ENCODE measurements at regions of chr1 and their contacts with region 1.

Region 1: DNA sequence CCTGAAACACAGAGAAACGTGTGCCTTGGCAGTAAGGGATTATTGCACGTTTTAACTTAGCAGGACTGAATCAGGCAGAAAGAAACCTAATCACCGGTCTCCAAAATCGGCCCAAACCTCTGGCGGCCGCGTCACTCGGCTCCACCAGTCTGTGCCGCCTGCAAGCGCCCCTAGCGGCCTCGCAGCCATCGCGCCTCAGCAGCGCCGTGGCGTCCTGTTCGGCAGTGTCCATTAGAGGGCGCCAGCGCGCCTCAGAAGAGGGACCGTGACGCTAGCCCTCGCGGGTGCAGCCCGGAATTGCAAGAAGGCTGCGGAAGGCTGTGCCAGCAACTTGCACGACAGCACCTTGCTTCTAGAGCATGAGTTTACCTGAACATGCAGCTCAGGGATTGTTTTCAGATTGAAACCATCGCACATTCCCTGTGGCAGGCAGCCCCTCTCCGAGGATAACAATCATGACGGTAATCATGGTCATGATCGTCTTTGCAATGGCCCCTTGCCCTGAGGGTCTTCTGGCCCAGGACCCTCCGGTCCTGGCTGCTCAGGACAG is 164.4 kb downstream of the TRIM33 start:
- DNase-seq: peak; percentile 70
- ATAC-seq: peak; percentile 100
- H3K4me3 ChIP-seq: peak overlapping the region; percentile 33; the same call in 1 of the 2 replicates
- H3K27ac ChIP-seq: no peak overlapping the region
- H3K4me1 ChIP-seq: peaks cover 6% of the 10 kb centered on the region; the same call in 1 of the 2 replicates
- H3K27me3 ChIP-seq: peaks cover 0 to 2% of the 10 kb centered on the region in 2 experiments; a peak in 2 of 4 replicates
- CTCF ChIP-seq: peak; percentile 100; a peak in 5 of 6 replicates
- EP300 ChIP-seq: no peak
- POLR2A ChIP-seq: no peak
- RAD21 ChIP-seq: peak; percentile 99

Region 2: DNA sequence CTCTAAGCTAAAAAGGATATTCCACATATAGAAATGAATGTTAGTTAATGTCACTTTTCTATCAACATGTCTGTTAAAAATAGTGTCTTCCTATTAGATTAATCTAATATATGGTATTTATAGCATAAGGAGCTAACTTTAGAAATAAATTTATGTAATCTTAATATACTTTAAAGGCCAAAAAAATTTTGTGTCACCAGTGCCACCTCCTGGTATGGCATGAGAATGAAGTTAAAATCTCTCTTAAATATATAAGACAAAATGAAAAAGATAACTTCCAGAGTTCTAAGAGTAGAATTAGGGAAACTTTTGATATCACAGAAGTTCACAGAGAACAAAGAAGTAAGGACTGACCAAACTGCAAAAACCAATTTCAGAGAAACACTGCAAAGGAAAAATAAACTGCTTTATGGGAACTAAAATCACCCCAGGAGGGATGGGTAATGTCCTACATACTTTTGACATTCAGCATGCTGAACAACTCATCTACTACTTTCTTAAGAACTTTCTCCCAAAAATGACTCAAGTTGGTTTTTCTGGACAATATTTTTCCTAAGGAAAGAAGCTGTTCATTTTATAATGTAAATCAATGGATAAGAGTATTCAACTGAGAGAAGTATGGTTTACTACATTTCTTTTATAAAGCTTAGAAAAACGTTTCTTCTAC is 81.7 kb after region 1 on chr1:
- CTCF ChIA-PET with region 1: interaction called, 11 read pairs
- POLR2A ChIA-PET with region 1: no interaction called
- RAD21 ChIA-PET with region 1: no interaction called
- SMC1A ChIA-PET with region 1: interaction called, 3 read pairs
- in situ Hi-C with region 1: no loop called
- intact Hi-C with region 1: loop called (anchors 10 kb)
- DNase-seq: no peak
- ATAC-seq: no peak
- H3K4me3 ChIP-seq: no peak overlapping the region
- H3K27ac ChIP-seq: no peak overlapping the region
- H3K4me1 ChIP-seq: 0 out of 2 replicates have a peak, but pooled peaks cover 2% of the 10 kb centered on the region
- H3K27me3 ChIP-seq: no peaks in the 10 kb centered on the region
- CTCF ChIP-seq: peak in 2 of 3 experiments; percentile 23 to 34; a peak in 3 of 6 replicates
- EP300 ChIP-seq: no peak
- POLR2A ChIP-seq: no peak
- RAD21 ChIP-seq: peak; percentile 26; the same call in 1 of the 2 replicates

Region 3: GRCh38 chr1:114558544-114558943 is 212.0 kb after region 1 on chr1:
- CTCF ChIA-PET with region 1: interaction called, 54 read pairs
- POLR2A ChIA-PET with region 1: no interaction called
- RAD21 ChIA-PET with region 1: no interaction called
- SMC1A ChIA-PET with region 1: interaction called, 7 read pairs
- in situ Hi-C with region 1: no loop called
- intact Hi-C with region 1: loop called (anchors 1 kb)
- DNase-seq: no peak
- ATAC-seq: peak; percentile 88
- H3K4me3 ChIP-seq: no peak overlapping the region
- H3K27ac ChIP-seq: no peak overlapping the region
- H3K4me1 ChIP-seq: peaks cover 11% of the 10 kb centered on the region
- H3K27me3 ChIP-seq: no peaks in the 10 kb centered on the region
- CTCF ChIP-seq: peak; percentile 32 to 55 (median 39)
- EP300 ChIP-seq: no peak
- POLR2A ChIP-seq: no peak
- RAD21 ChIP-seq: peak; percentile 69

Region 4: GRCh38 chr1:114670083-114671010 is 323.8 kb after region 1 on chr1:
- CTCF ChIA-PET with region 1: interaction called, 31 read pairs
- POLR2A ChIA-PET with region 1: no interaction called
- RAD21 ChIA-PET with region 1: no interaction called
- SMC1A ChIA-PET with region 1: no interaction called
- in situ Hi-C with region 1: loop called (anchors 10 kb)
- intact Hi-C with region 1: loop called (anchors 5 kb)
- DNase-seq: peak; percentile 33
- ATAC-seq: peak; percentile 100
- H3K4me3 ChIP-seq: peak overlapping the region; percentile 74
- H3K27ac ChIP-seq: no peak overlapping the region
- H3K4me1 ChIP-seq: peaks cover 5% of the 10 kb centered on the region
- H3K27me3 ChIP-seq: no peaks in the 10 kb centered on the region; a peak in 1 of 4 replicates
- CTCF ChIP-seq: no peak
- EP300 ChIP-seq: no peak
- POLR2A ChIP-seq: 0 out of 2 replicates have a peak, but pooled peaks have one; percentile 38
- RAD21 ChIP-seq: no peak